Left colon (tissue), 2 donors: ENCODE measurements at regions of chr3 and their contacts with region 1.

Region 1: DNA sequence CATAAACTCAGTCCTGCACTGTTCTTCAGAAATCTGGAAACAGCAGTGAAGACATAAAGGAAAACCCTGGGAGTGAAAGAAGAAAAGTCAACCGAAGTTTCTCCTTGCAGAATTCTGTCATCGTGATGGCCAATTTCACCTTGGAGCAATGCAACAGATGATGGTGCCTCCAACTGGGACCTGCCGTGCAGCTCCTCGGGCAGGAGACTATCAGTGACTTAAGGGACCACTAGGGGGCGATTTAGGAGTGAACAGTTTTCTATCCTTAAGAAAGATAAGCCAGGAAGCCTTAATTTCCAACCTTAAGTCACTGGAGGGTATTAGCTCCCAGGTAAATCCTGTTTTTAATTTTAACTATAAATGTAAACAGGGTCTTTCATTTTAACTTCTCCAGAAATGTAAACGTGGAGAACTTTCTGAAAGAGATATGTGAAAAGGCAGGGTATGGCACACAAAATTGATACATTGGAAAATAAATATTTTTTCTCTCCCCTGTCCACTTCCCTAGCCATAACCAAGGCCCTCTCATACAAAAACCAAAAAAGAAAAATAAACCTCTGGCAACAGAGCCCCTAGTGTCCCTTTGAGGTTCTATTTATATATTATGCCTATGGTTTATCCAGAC is 116.3 kb downstream of the PDZRN3 start:
- DNase-seq: peak; percentile 41 to 48
- ATAC-seq: peak; percentile 51

Region 2: DNA sequence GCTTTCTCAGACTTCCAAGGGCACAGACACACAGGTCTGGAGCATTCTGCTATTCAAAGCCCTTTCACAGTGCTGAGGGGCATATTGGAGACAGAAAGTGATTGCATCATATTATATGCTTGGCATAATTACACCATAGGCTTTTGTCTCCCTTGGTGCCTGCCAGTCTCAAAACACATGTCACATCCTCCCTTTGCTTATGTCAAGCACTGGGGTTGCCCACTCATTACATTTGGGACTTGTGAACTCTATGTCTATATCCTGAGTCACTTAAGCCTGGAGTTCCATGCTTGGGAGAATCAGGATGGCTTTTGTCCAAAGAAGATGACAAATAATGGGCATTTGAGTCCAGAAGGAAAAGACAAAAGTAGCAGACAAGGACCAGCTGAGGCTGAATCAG is 128.6 kb after region 1 on chr3:
- intact Hi-C with region 1: no loop called
- DNase-seq: no peak
- ATAC-seq: no peak

Region 3: GRCh38 chr3:73848173-73848906 is 339.9 kb after region 1 on chr3:
- intact Hi-C with region 1: loop called in 1 of 2 experiments (anchors 5 kb)
- DNase-seq: no peak
- ATAC-seq: peak; percentile 51